Tibial artery (tissue), 4 donors: ENCODE measurements at regions of chr12 and their contacts with region 1.

Region 1: DNA sequence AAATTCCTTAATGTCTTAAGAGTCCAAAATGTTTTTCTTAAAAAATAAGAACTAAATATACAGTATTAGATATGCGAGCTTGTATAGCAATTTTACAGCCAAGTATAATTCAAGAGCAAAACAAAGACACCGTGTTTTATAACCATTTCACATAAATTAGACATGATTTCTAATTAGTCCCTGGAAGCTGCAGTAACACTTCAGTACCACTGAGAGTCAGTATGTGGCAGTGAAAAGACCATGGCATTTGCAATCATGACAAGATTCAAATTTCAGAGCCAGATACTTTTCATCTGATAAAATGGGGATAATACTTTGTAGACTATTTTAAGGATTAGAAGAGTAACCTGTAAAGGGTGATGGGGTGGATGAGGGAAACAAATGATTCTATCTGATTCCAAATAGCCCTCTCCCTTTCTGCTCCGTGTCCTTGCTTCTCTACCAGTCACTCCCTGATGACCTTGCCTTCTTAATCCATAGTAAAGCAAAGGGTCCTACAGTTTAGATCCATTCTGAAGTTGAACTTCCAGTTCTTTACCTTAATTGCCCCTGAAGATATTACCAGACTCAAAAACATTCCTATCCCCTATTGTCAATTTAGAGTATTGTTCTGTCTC is 145.4 kb upstream of the ABCD2 start:
- DNase-seq: no peak
- H3K4me3 ChIP-seq: no peak overlapping the region
- H3K27ac ChIP-seq: no peak overlapping the region
- H3K4me1 ChIP-seq: no peaks in the 10 kb centered on the region
- H3K27me3 ChIP-seq: no peaks in the 10 kb centered on the region
- CTCF ChIP-seq: peak; percentile 64 to 67

Region 2: DNA sequence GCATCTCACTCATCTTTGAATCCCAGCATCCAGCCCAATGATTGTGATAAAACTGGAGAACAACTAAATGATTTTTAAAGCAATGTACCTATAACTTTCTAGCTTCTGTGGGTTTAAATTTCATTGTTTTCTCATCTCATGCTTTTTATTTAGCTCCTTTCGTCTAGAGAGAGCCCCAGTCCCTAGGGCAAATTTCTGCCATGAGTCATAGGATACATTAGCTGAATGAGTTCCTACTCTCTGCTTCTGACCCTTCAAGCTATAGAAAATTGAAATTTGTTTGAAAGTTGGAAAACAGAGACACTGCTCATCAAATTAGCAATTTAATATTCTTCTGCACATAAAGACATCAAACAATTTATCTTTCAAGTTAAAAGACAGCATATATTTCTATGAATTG is 436.0 kb before region 1 on chr12:
- intact Hi-C with region 1: no loop called
- DNase-seq: no peak
- H3K4me3 ChIP-seq: no peak overlapping the region
- H3K27ac ChIP-seq: no peak overlapping the region
- H3K4me1 ChIP-seq: no peaks in the 10 kb centered on the region
- H3K27me3 ChIP-seq: no peaks in the 10 kb centered on the region
- CTCF ChIP-seq: no peak

Region 3: GRCh38 chr12:39824505-39825212 is 59.6 kb after region 1 on chr12:
- intact Hi-C with region 1: no loop called
- DNase-seq: no peak
- H3K4me3 ChIP-seq: no peak overlapping the region
- H3K27ac ChIP-seq: no peak overlapping the region
- H3K4me1 ChIP-seq: no peaks in the 10 kb centered on the region
- H3K27me3 ChIP-seq: no peaks in the 10 kb centered on the region
- CTCF ChIP-seq: no peak

Region 4: GRCh38 chr12:39986674-39987073 is 221.6 kb after region 1 on chr12:
- intact Hi-C with region 1: loop called (anchors 10 kb)
- DNase-seq: no peak
- H3K4me3 ChIP-seq: no peak overlapping the region
- H3K27ac ChIP-seq: no peak overlapping the region
- H3K4me1 ChIP-seq: no peaks in the 10 kb centered on the region
- H3K27me3 ChIP-seq: no peaks in the 10 kb centered on the region
- CTCF ChIP-seq: no peak

Region 5: GRCh38 chr12:40117818-40118217 is 352.8 kb after region 1 on chr12:
- intact Hi-C with region 1: loop called (anchors 10 kb)
- DNase-seq: no peak
- H3K4me3 ChIP-seq: no peak overlapping the region
- H3K27ac ChIP-seq: no peak overlapping the region
- H3K4me1 ChIP-seq: no peaks in the 10 kb centered on the region
- H3K27me3 ChIP-seq: no peaks in the 10 kb centered on the region
- CTCF ChIP-seq: no peak